ENCODE measurements at regions of chr4 and their contacts with region 1.

Region 1: GRCh38 chr4:99816545-99817308 is at the start of gene DAPP1:
- DNase-seq: no peak
- ATAC-seq: no peak
- H3K4me3 ChIP-seq: no peak within 1 kb of the TSS
- H3K27ac ChIP-seq: no peak within 1 kb of the TSS
- H3K4me1 ChIP-seq: no peaks in the 10 kb centered on the region
- H3K27me3 ChIP-seq: no peaks in the 10 kb centered on the region
- CTCF ChIP-seq: no peak
- total RNA-seq, gene DAPP1: not detected

Region 2: DNA sequence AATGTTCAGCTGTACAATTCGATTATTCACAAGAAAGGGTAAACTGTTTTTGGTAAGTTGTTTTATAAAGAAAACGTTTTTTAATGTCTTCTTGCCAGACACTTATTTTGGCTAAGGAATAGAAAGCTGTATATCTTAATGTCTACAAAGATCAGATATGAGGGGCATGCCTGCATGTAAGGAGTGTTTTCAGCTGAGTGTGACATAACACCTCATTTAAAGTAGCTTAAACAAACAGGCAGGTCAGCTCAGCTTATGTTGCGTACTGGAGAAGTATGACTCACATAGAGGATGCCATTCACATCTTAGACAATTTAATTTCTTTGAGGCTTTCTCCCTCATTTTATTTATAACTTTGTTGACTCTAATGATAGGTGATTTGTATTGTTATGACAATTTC is 47.1 kb after region 1 on chr4:
- CTCF ChIA-PET with region 1: interaction called, 12 read pairs
- POLR2A ChIA-PET with region 1: no interaction called
- in situ Hi-C with region 1: no loop called
- intact Hi-C with region 1: no loop called
- DNase-seq: no peak
- ATAC-seq: no peak
- H3K4me3 ChIP-seq: no peak overlapping the region
- H3K27ac ChIP-seq: no peak overlapping the region
- H3K4me1 ChIP-seq: no peaks in the 10 kb centered on the region
- H3K27me3 ChIP-seq: no peaks in the 10 kb centered on the region; the same call in none of the 2 replicates
- CTCF ChIP-seq: no peak

Measured in Panc1 (cell line).